GM13976 (cell line): ENCODE measurements at regions of chr17 and their contacts with region 1.

Region 1: GRCh38 chr17:50491505-50491904 is 12.8 kb downstream of the RSAD1 start:
- DNase-seq: no peak
- CTCF ChIP-seq: no peak

Region 2: DNA sequence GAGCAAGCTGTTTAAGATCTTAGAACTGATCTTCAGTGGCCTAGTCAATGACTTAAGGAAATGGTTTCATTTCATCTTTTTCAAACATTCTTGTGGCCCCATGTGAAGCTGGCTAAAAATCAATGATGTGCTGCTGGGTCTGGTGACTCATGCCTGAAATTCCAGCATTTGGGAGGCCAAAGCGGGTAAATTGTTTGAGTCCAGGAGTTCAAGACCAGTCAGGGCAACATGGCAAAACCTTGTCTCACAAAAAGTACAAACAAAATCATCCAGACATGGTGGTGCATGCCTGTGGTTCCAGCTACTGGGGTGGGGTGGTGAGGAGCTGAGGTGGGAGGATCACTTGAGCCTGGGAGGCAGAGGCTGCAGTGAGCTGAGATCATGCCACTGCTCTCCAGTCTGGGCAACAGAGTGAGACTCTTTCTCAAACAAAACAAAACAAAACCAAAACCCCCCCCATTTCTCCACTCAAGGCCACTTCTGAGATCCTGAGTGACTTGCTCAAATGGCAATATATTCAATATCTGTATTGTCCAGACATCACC is 272.7 kb before region 1 on chr17:
- in situ Hi-C with region 1: no loop called
- DNase-seq: peak; percentile 37
- CTCF ChIP-seq: no peak

Region 3: DNA sequence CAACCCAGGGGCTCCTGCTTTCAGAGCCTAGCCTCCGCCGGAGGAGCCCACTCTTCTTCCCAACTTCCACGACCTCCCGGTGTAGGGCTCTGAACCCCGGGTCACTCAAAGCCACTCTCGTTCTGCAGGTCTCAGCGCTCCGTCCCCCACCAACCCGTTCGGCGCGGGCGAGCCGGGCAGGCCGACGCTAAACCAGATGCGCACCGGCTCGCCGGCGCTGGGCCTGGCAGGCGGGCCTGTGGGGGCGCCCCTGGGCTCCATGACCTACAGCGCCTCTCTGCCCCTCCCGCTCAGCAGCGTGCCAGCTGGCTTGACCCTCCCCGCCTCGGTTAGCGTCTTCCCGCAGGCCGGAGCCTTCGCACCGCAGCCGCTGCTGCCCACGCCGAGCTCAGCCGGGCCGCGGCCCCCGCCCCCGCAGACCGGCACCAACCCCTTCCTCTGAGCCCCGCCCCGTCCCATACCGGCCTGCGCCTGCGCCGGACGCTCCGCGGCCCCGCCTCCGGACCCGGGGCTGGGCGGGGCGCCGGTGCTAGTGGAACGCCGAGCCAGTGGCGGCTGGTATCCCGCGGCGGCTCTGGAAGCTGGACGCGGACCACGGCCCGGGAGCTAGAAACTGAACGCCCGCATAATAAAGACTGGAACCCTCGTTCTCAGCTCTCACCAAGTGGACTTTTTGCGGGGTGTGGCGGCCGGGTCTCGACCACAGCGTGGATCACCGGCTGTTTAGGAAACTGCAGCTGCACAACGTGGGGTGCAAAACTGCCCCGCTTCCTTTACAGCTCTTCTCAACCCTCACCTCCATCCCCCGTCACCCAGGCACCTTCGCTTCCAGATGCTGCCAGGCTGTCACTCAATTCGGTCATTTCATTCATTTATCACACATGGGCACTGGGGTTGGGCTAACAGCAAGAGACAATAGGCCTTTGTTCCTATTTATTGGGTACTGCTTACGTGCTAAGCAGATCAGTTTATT is 50.5 kb after region 1 on chr17:
- in situ Hi-C with region 1: loop called (anchors 5 kb)
- DNase-seq: peak; percentile 99
- CTCF ChIP-seq: peak; percentile 16

Region 4: DNA sequence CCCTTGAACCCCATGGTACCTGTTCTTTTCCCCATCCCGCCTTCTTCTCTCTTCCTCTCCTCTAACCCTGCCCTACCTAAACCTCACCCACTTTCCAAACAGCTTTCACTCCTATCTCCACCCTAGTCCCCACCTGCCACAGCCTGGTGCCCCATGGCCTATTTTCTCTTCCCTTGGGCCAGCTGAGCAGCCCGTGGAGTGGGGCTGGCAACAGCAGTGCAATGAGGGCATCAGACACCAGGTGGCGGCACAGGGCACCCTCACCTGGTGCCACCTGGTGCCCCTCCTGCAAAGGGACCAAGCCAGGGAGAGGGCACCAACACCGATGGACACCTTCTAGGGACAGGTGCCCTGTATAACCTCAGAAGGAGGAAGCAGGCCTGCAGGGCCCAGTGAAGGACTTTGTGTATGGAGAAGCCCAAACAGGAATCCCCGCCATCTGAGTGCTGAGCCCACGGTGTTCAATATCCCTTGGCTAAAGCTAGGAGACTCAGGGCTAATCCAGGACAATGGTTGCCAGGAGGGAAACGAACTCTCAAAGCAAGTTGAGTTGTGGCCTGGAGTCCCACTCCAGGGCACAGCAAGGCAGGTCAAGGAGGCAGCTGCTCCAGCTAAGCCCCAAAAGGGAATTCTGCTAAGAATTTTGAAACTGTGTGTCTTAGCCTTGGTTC is 139.2 kb after region 1 on chr17:
- in situ Hi-C with region 1: no loop called
- DNase-seq: peak; percentile 76
- CTCF ChIP-seq: peak; percentile 45